ENCODE measurements at regions of chr10 and their contacts with region 1.

Region 1: GRCh38 chr10:110629680-110630191 is 14.4 kb upstream of the RBM20 start:
- DNase-seq: peak in 1 of 2 donors; percentile 76
- H3K4me3 ChIP-seq: no peak overlapping the region
- H3K27ac ChIP-seq: peak overlapping the region; percentile 84 to 85
- H3K4me1 ChIP-seq: peaks cover 0 to 7% of the 10 kb centered on the region in 2 donors
- H3K27me3 ChIP-seq: no peaks in the 10 kb centered on the region
- CTCF ChIP-seq: no peak

Region 2: DNA sequence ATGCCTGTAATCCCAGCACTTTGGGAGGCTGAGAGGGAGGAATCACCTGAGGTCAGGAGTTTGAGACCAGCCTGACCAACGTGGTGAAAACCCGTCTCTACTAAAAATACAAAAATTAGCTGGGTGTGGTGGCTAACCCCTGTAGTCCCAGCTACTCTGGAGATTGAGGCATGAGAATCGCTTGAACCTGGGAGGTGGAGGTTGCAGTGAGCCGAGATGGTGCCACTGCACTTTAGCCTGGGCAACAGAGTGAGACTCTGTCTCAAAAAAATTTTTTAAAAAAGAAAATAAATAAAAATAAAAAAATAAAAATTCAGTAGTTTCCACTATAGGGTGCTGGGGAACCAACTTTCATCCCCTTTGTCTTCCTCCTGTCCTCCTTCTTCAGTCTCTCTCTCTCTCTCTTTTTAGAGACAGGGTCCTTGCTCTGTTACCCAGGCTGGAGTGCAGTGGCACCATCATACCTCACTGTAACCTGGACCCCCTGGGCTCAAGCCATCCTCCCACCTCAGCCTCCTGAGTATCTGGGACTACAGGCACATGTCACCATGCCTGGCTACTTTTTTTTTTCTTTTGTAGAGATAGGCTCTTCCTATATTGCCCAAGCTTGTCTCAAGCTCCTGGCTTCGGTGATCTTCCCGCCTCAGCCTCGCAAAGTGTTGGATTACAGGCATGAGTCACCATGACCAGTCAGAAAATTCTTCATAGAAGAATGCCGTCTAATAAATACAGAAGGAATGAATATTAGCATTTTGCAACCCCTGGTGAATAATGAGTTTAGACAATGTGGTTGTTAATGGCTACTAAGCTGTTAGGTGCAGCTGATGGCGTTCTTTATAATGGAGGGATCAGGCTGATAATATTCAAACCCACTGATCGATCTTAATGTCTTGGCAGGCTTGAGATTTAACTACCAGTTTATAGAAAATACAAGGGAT is 35.0 kb after region 1 on chr10:
- intact Hi-C with region 1: loop called (anchors 5 kb)
- DNase-seq: peak in 1 of 2 donors; percentile 76
- H3K4me3 ChIP-seq: no peak overlapping the region
- H3K27ac ChIP-seq: peak overlapping the region; percentile 4 to 52
- H3K4me1 ChIP-seq: peaks cover 0 to 6% of the 10 kb centered on the region in 2 donors
- H3K27me3 ChIP-seq: no peaks in the 10 kb centered on the region
- CTCF ChIP-seq: no peak

Region 3: GRCh38 chr10:110725801-110726630 is 96.3 kb after region 1 on chr10:
- intact Hi-C with region 1: loop called (anchors 5 kb)
- DNase-seq: peak in 1 of 2 donors; percentile 69
- H3K4me3 ChIP-seq: no peak overlapping the region
- H3K27ac ChIP-seq: no peak overlapping the region
- H3K4me1 ChIP-seq: peaks cover 0 to 3% of the 10 kb centered on the region in 2 donors
- H3K27me3 ChIP-seq: no peaks in the 10 kb centered on the region
- CTCF ChIP-seq: no peak

Measured in ascending aorta (tissue), 2 donors.